ENCODE measurements at regions of chr4 and their contacts with region 1.

Region 1: DNA sequence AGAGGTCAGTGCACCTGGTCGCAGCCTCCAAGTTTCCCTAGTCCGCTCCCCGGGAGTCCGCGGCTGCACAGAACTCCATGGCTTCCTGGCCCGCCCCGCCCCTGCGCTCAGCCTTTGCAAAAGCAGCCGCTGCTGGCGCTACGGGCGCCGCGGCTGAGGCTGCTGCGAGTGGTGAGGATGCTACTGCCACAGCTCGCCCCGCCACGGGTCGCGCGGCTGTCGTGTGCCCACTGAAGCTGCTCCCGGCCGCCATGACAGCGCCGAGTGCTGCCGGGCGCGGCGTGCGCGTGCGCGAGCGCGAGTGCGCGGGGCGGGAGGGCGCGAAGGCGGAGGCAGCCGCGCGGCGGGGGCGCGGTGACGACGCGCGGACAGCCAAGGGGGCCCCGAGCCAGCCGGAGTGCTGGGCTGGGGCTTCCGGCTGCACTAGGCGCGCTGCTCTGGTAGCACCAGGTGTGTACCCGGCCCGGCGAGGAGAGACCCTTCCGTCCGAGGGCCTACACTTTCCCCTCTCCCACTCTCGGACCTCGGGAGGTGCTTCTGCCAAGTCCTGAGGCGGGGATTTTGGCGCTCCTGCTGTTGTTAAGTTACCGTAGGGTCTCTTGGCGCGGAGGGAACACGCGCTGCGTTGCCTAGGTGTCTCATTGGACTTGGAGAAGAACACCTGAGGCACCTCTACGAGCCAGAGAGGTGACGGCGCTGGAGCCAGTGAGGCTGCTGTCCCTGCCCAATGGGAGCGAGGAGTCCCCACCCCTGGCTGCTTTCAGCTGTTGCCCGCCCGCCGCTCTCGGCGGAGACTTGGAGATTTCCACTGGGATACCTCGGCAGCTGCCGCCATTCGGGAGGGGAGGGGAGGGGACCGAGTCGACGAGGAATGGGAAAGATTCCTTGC is 619 bp upstream of the LRBA start:
- DNase-seq: peak; percentile 86

Region 2: GRCh38 chr4:151099229-151099975 is 83.7 kb after region 1 on chr4 and contains the start of gene RPS3A:
- intact Hi-C with region 1: loop called (anchors 1 kb)
- DNase-seq: peak; percentile 97
- total RNA-seq, gene RPS3A: 807 TPM

Measured in cardiac septum (tissue), 1 donor.